Endothelial cell of umbilical vein (primary cell): ENCODE measurements at regions of chr1 and their contacts with region 1.

Region 1: DNA sequence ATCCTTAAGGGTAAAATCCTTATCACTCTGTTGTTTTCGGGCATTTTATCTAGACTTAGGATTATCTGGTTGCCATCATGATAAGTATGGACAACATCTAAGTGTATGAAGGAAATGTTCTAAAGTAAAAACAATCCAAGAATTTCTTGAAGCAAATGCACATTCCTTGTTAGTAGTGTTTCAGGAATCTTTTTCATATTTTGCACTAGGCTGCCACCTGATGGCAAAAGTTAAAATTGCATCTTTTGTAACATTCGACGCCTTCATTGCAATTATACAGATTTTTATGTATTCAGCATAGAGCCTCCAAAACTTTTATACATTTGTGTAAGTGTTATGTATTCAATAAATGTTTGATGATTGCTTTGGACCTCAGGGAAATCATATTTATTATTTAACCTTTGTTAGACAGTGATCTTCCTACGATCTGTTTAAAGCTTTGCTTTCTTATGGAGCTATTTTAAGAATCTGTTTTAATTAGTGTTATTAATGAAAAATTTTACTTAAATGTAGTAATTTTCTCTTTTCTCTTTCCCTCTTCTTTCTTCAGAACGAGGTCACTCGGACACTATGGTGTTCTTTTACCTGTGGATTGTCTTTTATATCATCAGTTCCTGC is 49.4 kb upstream of the KIAA1614 start:
- DNase-seq: peak; percentile 80
- H3K4me3 ChIP-seq: no peak overlapping the region
- H3K27ac ChIP-seq: no peak overlapping the region
- H3K4me1 ChIP-seq: peaks cover 3% of the 10 kb centered on the region
- H3K27me3 ChIP-seq: no peaks in the 10 kb centered on the region
- CTCF ChIP-seq: peak; percentile 42 to 45
- POLR2A ChIP-seq: no peak

Region 2: GRCh38 chr1:180515864-180516388 is 347.3 kb before region 1 on chr1:
- CTCF ChIA-PET with region 1: interaction called, 314 read pairs
- POLR2A ChIA-PET with region 1: no interaction called
- dilution Hi-C with region 1: loop called (anchors 25 kb)
- intact Hi-C with region 1: loop called (anchors 1 kb)
- DNase-seq: peak; percentile 91
- H3K4me3 ChIP-seq: no peak overlapping the region
- H3K27ac ChIP-seq: peak overlapping the region; percentile 52
- H3K4me1 ChIP-seq: peaks cover 29% of the 10 kb centered on the region
- H3K27me3 ChIP-seq: no peaks in the 10 kb centered on the region
- CTCF ChIP-seq: peak; percentile 68 to 73
- POLR2A ChIP-seq: no peak

Region 3: GRCh38 chr1:180548686-180549317 is 314.5 kb before region 1 on chr1:
- CTCF ChIA-PET with region 1: interaction called, 10 read pairs
- POLR2A ChIA-PET with region 1: no interaction called
- dilution Hi-C with region 1: no loop called
- intact Hi-C with region 1: no loop called
- DNase-seq: no peak
- H3K4me3 ChIP-seq: no peak overlapping the region
- H3K27ac ChIP-seq: no peak overlapping the region
- H3K4me1 ChIP-seq: no peaks in the 10 kb centered on the region
- H3K27me3 ChIP-seq: no peaks in the 10 kb centered on the region
- CTCF ChIP-seq: no peak
- POLR2A ChIP-seq: no peak

Region 4: GRCh38 chr1:180623579-180624347 is 239.5 kb before region 1 on chr1:
- CTCF ChIA-PET with region 1: interaction called, 42 read pairs
- POLR2A ChIA-PET with region 1: no interaction called
- dilution Hi-C with region 1: no loop called
- intact Hi-C with region 1: no loop called
- DNase-seq: peak; percentile 30
- H3K4me3 ChIP-seq: no peak overlapping the region
- H3K27ac ChIP-seq: no peak overlapping the region
- H3K4me1 ChIP-seq: no peaks in the 10 kb centered on the region
- H3K27me3 ChIP-seq: peaks cover 13 to 20% of the 10 kb centered on the region in 2 experiments
- CTCF ChIP-seq: peak in 1 of 2 donors; percentile 32
- POLR2A ChIP-seq: no peak

Region 5: DNA sequence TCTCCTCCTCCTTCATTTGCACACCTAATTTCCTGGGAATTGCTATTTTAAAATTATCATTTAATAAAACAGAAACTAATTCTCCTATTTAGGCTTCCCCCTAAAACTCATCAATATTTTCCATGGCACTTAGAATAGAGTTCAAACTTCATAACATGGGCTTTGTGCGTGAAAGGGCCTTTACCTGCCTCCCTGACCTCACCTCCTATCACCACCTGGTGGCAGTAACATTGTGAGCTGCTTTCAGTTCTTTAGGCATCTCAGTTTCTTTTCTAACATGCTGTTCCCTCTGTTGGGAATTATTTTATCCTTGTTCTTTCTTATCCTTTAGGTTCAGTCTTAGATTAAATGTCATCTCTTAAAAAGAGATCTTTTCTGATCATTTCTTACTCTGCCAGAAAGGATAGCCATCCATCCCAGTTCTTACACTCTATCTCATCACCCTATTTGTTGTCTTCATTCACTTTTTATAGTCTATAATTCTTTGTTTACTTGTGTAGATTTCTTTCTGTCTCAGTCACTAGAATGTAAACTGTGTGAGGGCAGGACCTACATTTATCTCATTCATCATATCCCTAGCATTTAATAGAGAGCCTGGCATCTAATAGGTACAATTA is 84.4 kb before region 1 on chr1:
- CTCF ChIA-PET with region 1: interaction called, 9 read pairs
- POLR2A ChIA-PET with region 1: no interaction called
- dilution Hi-C with region 1: no loop called
- intact Hi-C with region 1: loop called (anchors 5 kb)
- DNase-seq: no peak
- H3K4me3 ChIP-seq: no peak overlapping the region
- H3K27ac ChIP-seq: no peak overlapping the region
- H3K4me1 ChIP-seq: peaks cover under 1% of the 10 kb centered on the region
- H3K27me3 ChIP-seq: no peaks in the 10 kb centered on the region
- CTCF ChIP-seq: peak; percentile 15
- POLR2A ChIP-seq: no peak

Region 6: DNA sequence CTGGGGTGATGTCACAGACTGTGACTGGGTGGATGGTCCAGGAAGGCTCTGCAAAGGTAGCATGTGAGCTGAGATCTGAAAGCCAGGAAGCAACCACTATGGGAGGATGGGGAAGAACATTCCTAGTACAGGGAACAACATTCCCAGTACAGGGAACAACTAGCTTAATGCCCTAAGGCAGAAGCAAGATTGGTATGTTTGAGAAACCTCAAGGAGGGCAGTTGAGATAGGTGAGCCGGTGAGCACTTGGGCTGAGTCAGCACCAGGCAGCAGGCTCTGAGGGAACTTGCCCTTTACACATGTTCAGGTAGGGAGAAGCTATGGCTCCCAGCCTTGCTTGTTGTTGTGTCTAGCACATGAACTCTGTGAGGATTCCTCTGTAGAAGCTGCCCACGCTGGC is 595.8 kb after region 1 on chr1:
- CTCF ChIA-PET with region 1: no interaction called
- POLR2A ChIA-PET with region 1: no interaction called
- dilution Hi-C with region 1: no loop called
- intact Hi-C with region 1: no loop called
- DNase-seq: no peak
- H3K4me3 ChIP-seq: no peak overlapping the region
- H3K27ac ChIP-seq: no peak overlapping the region
- H3K4me1 ChIP-seq: no peaks in the 10 kb centered on the region
- H3K27me3 ChIP-seq: no peaks in the 10 kb centered on the region
- CTCF ChIP-seq: no peak
- POLR2A ChIP-seq: no peak